ENCODE measurements at regions of chr3 and their contacts with region 1.

Region 1: GRCh38 chr3:69439643-69440270 is 53.9 kb upstream of the FRMD4B start:
- DNase-seq: no peak
- H3K4me3 Mint-ChIP-seq: peak overlapping the region; percentile 13
- H3K27ac Mint-ChIP-seq: peak overlapping the region; percentile 4
- H3K4me1 Mint-ChIP-seq: peaks cover 35% of the 10 kb centered on the region
- H3K27me3 Mint-ChIP-seq: no peaks in the 10 kb centered on the region

Region 2: DNA sequence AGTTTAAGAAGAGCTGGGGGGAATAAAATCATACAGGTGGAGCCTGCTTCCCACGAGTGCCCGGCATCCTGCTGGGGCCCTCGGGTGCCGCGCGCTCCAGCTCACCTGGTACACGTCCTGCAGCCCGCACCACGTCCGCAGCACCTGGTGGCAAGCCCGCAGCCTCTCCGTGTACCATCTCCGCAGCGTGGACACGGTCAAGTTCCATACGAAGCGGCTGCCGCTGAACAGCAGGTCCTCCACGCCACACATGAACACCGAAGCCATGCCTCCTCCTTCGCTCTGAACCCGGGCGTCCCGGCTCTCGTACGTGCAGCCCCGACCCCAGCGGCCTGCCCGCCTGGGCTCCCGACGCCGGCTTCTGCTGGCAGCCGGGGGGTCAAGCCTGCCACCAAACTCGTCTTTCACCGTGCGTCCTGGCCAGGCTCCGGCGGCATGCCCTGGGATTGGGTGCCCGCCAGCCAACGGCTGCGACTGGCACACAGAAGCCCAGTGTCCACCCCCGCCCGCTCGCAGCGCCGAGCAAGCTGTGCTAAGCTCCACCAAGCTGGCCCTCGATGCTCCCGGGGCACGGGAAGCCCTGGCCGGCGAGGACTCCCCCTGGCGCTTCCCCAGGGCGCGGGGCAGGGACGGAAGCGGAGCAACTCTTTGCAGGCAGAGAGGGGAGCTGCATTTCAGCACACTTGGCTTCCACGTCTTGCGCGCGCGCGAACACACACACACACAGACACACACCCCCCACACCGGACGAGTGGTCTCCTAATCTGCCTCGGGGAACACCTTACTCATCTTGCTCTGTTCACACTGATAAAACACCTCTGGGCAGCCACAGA is 53.8 kb before region 1 on chr3 and contains the start of gene FRMD4B:
- intact Hi-C with region 1: loop called (anchors 5 kb)
- DNase-seq: peak; percentile 82
- H3K4me3 Mint-ChIP-seq: peak within 1 kb of the TSS; percentile 81
- H3K27ac Mint-ChIP-seq: peak within 1 kb of the TSS; percentile 15
- H3K4me1 Mint-ChIP-seq: peaks cover 17% of the 10 kb centered on the region
- H3K27me3 Mint-ChIP-seq: peaks cover 70% of the 10 kb centered on the region
- total RNA-seq, gene FRMD4B: 59.1 and 60.9 TPM in 2 replicates

Region 3: GRCh38 chr3:69474186-69474585 is 34.4 kb after region 1 on chr3:
- intact Hi-C with region 1: no loop called
- DNase-seq: no peak
- H3K4me3 Mint-ChIP-seq: no peak overlapping the region
- H3K27ac Mint-ChIP-seq: no peak overlapping the region
- H3K4me1 Mint-ChIP-seq: no peaks in the 10 kb centered on the region
- H3K27me3 Mint-ChIP-seq: peaks cover 5% of the 10 kb centered on the region

Region 4: DNA sequence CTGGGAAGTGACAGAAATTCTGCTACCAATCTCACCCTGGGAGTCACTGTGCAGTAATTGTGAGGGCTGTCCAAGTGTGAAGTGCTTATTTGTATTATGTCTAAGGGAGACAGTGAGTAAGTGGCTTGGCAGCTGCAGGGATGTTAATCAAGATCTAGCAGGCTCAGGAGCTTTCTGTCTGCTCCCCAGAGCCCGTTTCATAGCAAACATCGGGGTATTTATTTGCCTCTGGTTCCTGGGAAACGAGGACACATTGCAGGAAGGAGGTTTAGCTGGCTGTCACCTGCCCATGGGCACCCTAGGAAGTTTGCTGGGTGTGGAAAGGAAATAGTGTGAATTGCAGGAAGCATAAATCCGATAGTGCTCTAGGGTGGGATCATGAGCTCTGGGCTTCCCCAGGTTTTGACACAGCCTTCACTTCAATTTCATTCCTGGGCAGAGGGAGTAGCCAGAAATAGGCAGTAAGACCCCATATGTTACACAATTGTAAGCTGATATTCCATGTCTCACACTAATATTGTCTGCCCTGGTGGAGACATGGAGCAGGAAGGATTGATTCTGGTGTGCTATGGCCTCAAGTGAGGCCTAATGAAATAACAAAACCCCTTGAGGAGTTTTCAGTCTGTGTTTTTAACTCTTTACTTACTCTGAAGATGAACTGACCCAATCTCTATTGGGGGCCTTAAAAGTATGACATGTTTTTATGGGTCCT is 225.4 kb after region 1 on chr3:
- intact Hi-C with region 1: loop called (anchors 10 kb)
- DNase-seq: no peak
- H3K4me3 Mint-ChIP-seq: no peak overlapping the region
- H3K27ac Mint-ChIP-seq: no peak overlapping the region
- H3K4me1 Mint-ChIP-seq: no peaks in the 10 kb centered on the region
- H3K27me3 Mint-ChIP-seq: no peaks in the 10 kb centered on the region